ENCODE measurements at regions of chr3 and their contacts with region 1.

Region 1: GRCh38 chr3:98545940-98546339 is 14.2 kb downstream of the GPR15 start:
- DNase-seq: peak in 1 of 5 donors; percentile 47
- H3K4me3 ChIP-seq: peak overlapping the region in 1 of 2 donors; percentile 22
- H3K4me3 Mint-ChIP-seq: peak overlapping the region in 7 of 8 donors; percentile 63 to 84 (median 78)
- H3K27ac ChIP-seq: no peak overlapping the region
- H3K27ac Mint-ChIP-seq: peak overlapping the region; percentile 25 to 85 (median 79)
- H3K4me1 ChIP-seq: peaks cover 31% of the 10 kb centered on the region
- H3K4me1 Mint-ChIP-seq: peaks cover 13 to 26% (median 18%) of the 10 kb centered on the region in 4 donors
- H3K27me3 ChIP-seq: no peaks in the 10 kb centered on the region
- H3K27me3 Mint-ChIP-seq: no peaks in the 10 kb centered on the region

Region 2: DNA sequence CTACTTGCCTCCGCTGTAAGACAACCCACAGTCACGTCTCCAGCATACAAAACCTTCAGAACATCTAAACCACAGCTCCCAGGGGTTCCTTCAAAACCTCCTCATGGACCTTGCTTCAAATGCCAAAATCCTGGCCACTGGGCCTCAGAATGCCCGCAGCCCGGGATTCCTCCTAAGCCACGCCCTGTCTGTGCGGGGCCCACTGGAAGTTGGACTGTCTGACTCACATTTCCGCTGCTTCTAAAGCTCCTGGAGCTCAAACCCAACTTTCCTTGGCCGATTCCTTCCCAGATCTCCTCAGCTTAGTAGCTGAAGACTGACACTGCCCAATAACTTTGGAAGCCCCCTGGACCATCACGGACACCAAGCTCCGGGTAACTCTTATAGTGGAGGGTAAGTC is 299.8 kb before region 1 on chr3:
- CTCF ChIA-PET with region 1: no interaction called
- POLR2A ChIA-PET with region 1: no interaction called
- intact Hi-C with region 1: no loop called
- DNase-seq: no peak
- H3K4me3 ChIP-seq: no peak overlapping the region
- H3K4me3 Mint-ChIP-seq: no peak overlapping the region
- H3K27ac ChIP-seq: no peak overlapping the region
- H3K27ac Mint-ChIP-seq: no peak overlapping the region
- H3K4me1 ChIP-seq: no peaks in the 10 kb centered on the region
- H3K4me1 Mint-ChIP-seq: no peaks in the 10 kb centered on the region
- H3K27me3 ChIP-seq: no peaks in the 10 kb centered on the region
- H3K27me3 Mint-ChIP-seq: peaks cover 8% of the 10 kb centered on the region in 2 donors

Region 3: GRCh38 chr3:98531622-98532274 is 14.2 kb before region 1 on chr3 and contains the start of gene GPR15:
- CTCF ChIA-PET with region 1: interaction called, 5 read pairs
- POLR2A ChIA-PET with region 1: interaction called, 680 read pairs
- intact Hi-C with region 1: no loop called
- DNase-seq: peak in 1 of 5 donors; percentile 58
- H3K4me3 ChIP-seq: peak within 1 kb of the TSS in 1 of 2 donors; percentile 3
- H3K4me3 Mint-ChIP-seq: peak within 1 kb of the TSS; percentile 44 to 89 (median 68)
- H3K27ac ChIP-seq: peak within 1 kb of the TSS; percentile 9
- H3K27ac Mint-ChIP-seq: peak within 1 kb of the TSS in 6 of 7 donors; percentile 24 to 81 (median 46)
- H3K4me1 ChIP-seq: no peaks in the 10 kb centered on the region
- H3K4me1 Mint-ChIP-seq: peaks cover 10 to 19% (median 16%) of the 10 kb centered on the region in 4 donors
- H3K27me3 ChIP-seq: no peaks in the 10 kb centered on the region
- H3K27me3 Mint-ChIP-seq: no peaks in the 10 kb centered on the region
- total RNA-seq, gene GPR15: 31.2 to 32.0 TPM

Region 4: GRCh38 chr3:98556164-98557130 is 10.5 kb after region 1 on chr3:
- CTCF ChIA-PET with region 1: interaction called, 7 read pairs
- POLR2A ChIA-PET with region 1: interaction called, 225 read pairs
- intact Hi-C with region 1: no loop called
- DNase-seq: peak; percentile 43 to 90 (median 54)
- H3K4me3 ChIP-seq: peak overlapping the region in 1 of 2 donors; percentile 0
- H3K4me3 Mint-ChIP-seq: peak overlapping the region; percentile 72 to 89 (median 80)
- H3K27ac ChIP-seq: peak overlapping the region; percentile 73
- H3K27ac Mint-ChIP-seq: peak overlapping the region; percentile 94 to 99 (median 97)
- H3K4me1 ChIP-seq: peaks cover 86% of the 10 kb centered on the region
- H3K4me1 Mint-ChIP-seq: peaks cover 56 to 89% (median 76%) of the 10 kb centered on the region in 4 donors
- H3K27me3 ChIP-seq: no peaks in the 10 kb centered on the region
- H3K27me3 Mint-ChIP-seq: no peaks in the 10 kb centered on the region

Region 5: GRCh38 chr3:98563661-98564281 is 17.8 kb after region 1 on chr3:
- CTCF ChIA-PET with region 1: interaction called, 13 read pairs
- POLR2A ChIA-PET with region 1: interaction called, 225 read pairs
- intact Hi-C with region 1: no loop called
- DNase-seq: peak; percentile 66 to 86 (median 80)
- H3K4me3 ChIP-seq: no peak overlapping the region
- H3K4me3 Mint-ChIP-seq: peak overlapping the region; percentile 45 to 87 (median 82)
- H3K27ac ChIP-seq: peak overlapping the region; percentile 92
- H3K27ac Mint-ChIP-seq: peak overlapping the region; percentile 91 to 99 (median 98)
- H3K4me1 ChIP-seq: peaks cover 86% of the 10 kb centered on the region
- H3K4me1 Mint-ChIP-seq: peaks cover 55 to 87% (median 75%) of the 10 kb centered on the region in 4 donors
- H3K27me3 ChIP-seq: no peaks in the 10 kb centered on the region
- H3K27me3 Mint-ChIP-seq: no peaks in the 10 kb centered on the region

Region 6: GRCh38 chr3:98778852-98779413 is 233.0 kb after region 1 on chr3:
- CTCF ChIA-PET with region 1: no interaction called
- POLR2A ChIA-PET with region 1: no interaction called
- intact Hi-C with region 1: no loop called
- DNase-seq: no peak
- H3K4me3 ChIP-seq: no peak overlapping the region
- H3K4me3 Mint-ChIP-seq: no peak overlapping the region
- H3K27ac ChIP-seq: no peak overlapping the region
- H3K27ac Mint-ChIP-seq: no peak overlapping the region
- H3K4me1 ChIP-seq: no peaks in the 10 kb centered on the region
- H3K4me1 Mint-ChIP-seq: no peaks in the 10 kb centered on the region
- H3K27me3 ChIP-seq: no peaks in the 10 kb centered on the region
- H3K27me3 Mint-ChIP-seq: peaks cover 8 to 22% of the 10 kb centered on the region in 2 donors

Measured in CD4-positive, alpha-beta memory T cell (primary cell).